Naive thymus-derived CD4-positive, alpha-beta T cell (primary cell): ENCODE measurements at regions of chr6 and their contacts with region 1.

Region 1: DNA sequence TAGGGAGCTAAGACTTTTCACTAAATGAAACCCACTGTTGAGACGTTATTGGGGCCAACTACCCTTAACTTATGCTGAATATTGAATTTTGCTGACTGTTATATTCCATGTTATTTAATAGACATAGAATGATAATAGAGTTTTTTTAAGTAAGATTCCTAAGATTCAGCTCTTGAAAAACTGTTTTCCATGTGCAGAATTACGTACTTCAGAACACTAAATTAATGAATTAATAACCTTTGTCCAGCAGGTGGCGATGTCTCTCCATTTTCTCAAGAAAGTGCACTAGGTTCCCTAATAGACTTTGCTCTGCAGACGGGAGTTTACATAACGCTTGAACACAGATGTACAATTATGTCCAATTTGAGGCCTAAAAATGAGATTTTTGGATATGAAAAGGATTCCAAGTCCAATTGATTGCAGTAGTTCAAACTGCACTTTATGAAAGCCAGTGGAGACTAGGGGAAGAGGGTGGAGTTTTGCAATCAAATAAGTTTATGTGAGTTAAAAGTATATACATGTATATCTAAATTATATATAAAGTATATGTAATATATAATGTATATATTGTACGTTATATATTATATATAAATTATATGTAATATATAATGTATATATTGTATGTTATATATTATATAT is 282.1 kb downstream of the UST start:
- DNase-seq: peak in 8 of 9 donors; percentile 45 to 83 (median 76)
- ATAC-seq: peak; percentile 85
- H3K4me3 ChIP-seq: no peak overlapping the region
- H3K4me3 Mint-ChIP-seq: peak overlapping the region in 1 of 10 donors; percentile 68
- H3K27ac ChIP-seq: no peak overlapping the region
- H3K27ac Mint-ChIP-seq: peak overlapping the region in 4 of 9 donors; percentile 2 to 81 (median 43)
- H3K4me1 ChIP-seq: peaks cover 8 to 15% of the 10 kb centered on the region in 2 donors
- H3K4me1 Mint-ChIP-seq: peaks cover 0 to 52% (median 12%) of the 10 kb centered on the region in 7 donors
- H3K27me3 ChIP-seq: no peaks in the 10 kb centered on the region
- H3K27me3 Mint-ChIP-seq: no peaks in the 10 kb centered on the region

Region 2: GRCh38 chr6:148559848-148560433 is 468.9 kb before region 1 on chr6:
- CTCF ChIA-PET with region 1: no interaction called
- POLR2A ChIA-PET with region 1: no interaction called
- intact Hi-C with region 1: loop called in 1 of 2 experiments (anchors 5 kb)
- DNase-seq: peak; percentile 7 to 73 (median 53)
- ATAC-seq: peak; percentile 91
- H3K4me3 ChIP-seq: peak overlapping the region; percentile 31
- H3K4me3 Mint-ChIP-seq: peak overlapping the region in 5 of 10 donors; percentile 22 to 49 (median 28)
- H3K27ac ChIP-seq: no peak overlapping the region
- H3K27ac Mint-ChIP-seq: no peak overlapping the region
- H3K4me1 ChIP-seq: no peaks in the 10 kb centered on the region
- H3K4me1 Mint-ChIP-seq: peaks cover 0 to 8% (median 7%) of the 10 kb centered on the region in 7 donors
- H3K27me3 ChIP-seq: no peaks in the 10 kb centered on the region
- H3K27me3 Mint-ChIP-seq: peaks cover 21 to 44% (median 33%) of the 10 kb centered on the region in 5 donors

Region 3: DNA sequence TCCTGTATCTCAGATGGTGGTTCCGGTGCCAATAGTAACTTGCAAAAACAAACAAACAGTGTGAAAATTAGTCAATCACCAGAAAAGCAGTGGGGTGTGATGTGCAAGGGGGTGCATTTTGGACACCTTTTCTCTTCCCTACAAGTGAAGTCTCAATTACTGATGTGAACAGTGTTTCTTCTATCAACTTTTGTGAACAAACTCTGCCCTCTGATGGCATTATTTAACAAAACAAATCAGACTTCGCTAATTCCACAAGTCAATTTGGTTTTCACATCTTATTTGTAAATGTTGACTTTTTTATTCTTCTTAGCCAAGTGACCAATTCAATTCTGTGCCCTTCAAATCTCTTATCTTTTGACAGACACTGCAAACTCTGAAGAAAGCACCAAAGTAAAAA is 69.9 kb before region 1 on chr6:
- CTCF ChIA-PET with region 1: no interaction called
- POLR2A ChIA-PET with region 1: no interaction called
- intact Hi-C with region 1: no loop called
- DNase-seq: no peak
- ATAC-seq: no peak
- H3K4me3 ChIP-seq: no peak overlapping the region
- H3K4me3 Mint-ChIP-seq: no peak overlapping the region
- H3K27ac ChIP-seq: no peak overlapping the region
- H3K27ac Mint-ChIP-seq: no peak overlapping the region
- H3K4me1 ChIP-seq: no peaks in the 10 kb centered on the region
- H3K4me1 Mint-ChIP-seq: no peaks in the 10 kb centered on the region
- H3K27me3 ChIP-seq: no peaks in the 10 kb centered on the region
- H3K27me3 Mint-ChIP-seq: peaks cover 0 to 15% (median 0%) of the 10 kb centered on the region in 5 donors

Region 4: GRCh38 chr6:149065658-149066556 is 37.0 kb after region 1 on chr6:
- CTCF ChIA-PET with region 1: interaction called, 7 read pairs
- POLR2A ChIA-PET with region 1: no interaction called
- intact Hi-C with region 1: loop called (anchors 1 kb)
- DNase-seq: peak in 7 of 9 donors; percentile 76 to 92 (median 88)
- ATAC-seq: peak; percentile 97
- H3K4me3 ChIP-seq: peak overlapping the region; percentile 26
- H3K4me3 Mint-ChIP-seq: peak overlapping the region; percentile 22 to 85 (median 70)
- H3K27ac ChIP-seq: peak overlapping the region; percentile 73
- H3K27ac Mint-ChIP-seq: peak overlapping the region; percentile 85 to 98 (median 94)
- H3K4me1 ChIP-seq: peaks cover 19 to 23% of the 10 kb centered on the region in 2 donors
- H3K4me1 Mint-ChIP-seq: peaks cover 24 to 63% (median 41%) of the 10 kb centered on the region in 7 donors
- H3K27me3 ChIP-seq: no peaks in the 10 kb centered on the region
- H3K27me3 Mint-ChIP-seq: no peaks in the 10 kb centered on the region

Region 5: DNA sequence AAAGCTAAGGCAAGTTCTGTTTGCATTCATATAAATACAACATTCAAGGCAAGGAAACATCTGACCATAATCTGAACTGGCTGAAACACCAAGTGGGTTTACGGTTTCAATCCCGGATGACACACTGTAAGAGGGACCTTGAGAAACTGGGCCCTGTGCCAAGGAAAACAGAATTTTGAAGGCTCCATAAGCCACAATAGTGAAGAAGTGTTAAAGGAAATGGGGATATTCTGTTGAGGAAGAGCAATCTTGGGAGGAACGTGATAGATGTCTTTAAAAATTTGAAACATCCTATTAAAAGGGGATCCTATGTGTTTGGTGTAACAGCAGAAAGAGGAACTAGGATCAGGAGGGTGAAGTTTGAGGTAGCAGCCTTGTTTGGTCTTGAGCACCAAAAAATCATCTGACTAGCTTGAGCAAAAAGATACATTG is 206.3 kb after region 1 on chr6:
- CTCF ChIA-PET with region 1: no interaction called
- POLR2A ChIA-PET with region 1: no interaction called
- intact Hi-C with region 1: loop called in 1 of 2 experiments (anchors 1 kb)
- DNase-seq: no peak
- ATAC-seq: no peak
- H3K4me3 ChIP-seq: no peak overlapping the region
- H3K4me3 Mint-ChIP-seq: peak overlapping the region in 8 of 10 donors; percentile 38 to 85 (median 76)
- H3K27ac ChIP-seq: peak overlapping the region; percentile 9
- H3K27ac Mint-ChIP-seq: peak overlapping the region; percentile 5 to 99 (median 95)
- H3K4me1 ChIP-seq: peaks cover 30 to 40% of the 10 kb centered on the region in 2 donors
- H3K4me1 Mint-ChIP-seq: peaks cover 35 to 67% (median 51%) of the 10 kb centered on the region in 7 donors
- H3K27me3 ChIP-seq: no peaks in the 10 kb centered on the region
- H3K27me3 Mint-ChIP-seq: no peaks in the 10 kb centered on the region

Region 6: DNA sequence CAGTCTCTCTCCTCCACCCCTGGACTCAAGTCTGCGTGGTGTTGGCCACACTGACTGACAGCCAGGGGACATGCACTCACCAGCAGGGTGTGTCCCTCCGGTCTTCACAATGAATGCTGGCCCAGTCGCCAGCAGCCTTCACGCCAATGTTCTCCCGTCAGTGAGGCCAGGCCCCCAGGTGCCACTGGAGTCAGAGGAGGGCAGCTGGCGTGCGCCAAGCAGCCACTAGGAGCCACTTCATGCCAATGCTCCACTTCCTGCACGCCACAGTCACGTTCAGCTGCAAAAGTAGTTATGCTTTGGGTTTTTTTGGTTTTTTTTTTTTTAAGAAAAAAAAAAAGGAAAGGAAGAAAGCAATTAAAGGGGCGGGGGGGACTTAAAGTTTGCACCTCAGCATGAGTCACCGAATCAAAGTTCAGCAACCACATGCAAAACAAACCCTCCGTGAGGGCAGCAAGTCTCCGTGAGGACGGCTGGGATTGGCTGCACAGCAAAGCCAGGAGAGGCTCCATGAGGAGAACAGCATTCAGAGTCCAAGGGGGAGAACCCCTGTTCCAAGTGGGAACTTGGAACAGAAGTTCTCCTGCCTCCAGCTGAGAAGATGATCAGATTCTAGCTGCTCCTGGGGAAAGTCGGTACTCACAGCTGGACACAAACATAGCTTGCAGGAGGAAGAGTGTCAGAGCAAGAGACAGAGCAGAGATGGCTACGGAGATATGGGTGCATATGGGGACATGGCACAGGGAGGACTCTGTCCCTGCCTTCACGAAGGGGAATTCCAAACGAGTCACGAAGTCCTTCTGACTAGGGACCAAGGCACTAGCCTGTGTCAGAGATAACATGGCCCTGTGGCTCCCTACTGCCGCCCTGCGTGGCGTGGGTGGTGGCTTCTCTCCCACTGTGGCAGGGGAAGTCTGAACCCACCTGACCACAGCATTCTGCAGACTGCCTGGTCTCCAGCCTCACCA is 456.1 kb after region 1 on chr6 and contains the start of gene ZC3H12D:
- CTCF ChIA-PET with region 1: interaction called, 12 read pairs
- POLR2A ChIA-PET with region 1: interaction called, 6 read pairs
- intact Hi-C with region 1: no loop called
- DNase-seq: peak; percentile 65 to 85 (median 79)
- ATAC-seq: peak; percentile 83
- H3K4me3 ChIP-seq: peak within 1 kb of the TSS; percentile 57
- H3K4me3 Mint-ChIP-seq: peak within 1 kb of the TSS; percentile 85 to 95 (median 92)
- H3K27ac ChIP-seq: peak within 1 kb of the TSS; percentile 90
- H3K27ac Mint-ChIP-seq: peak within 1 kb of the TSS; percentile 94 to 100 (median 98)
- H3K4me1 ChIP-seq: peaks cover 25 to 41% of the 10 kb centered on the region in 2 donors
- H3K4me1 Mint-ChIP-seq: peaks cover 34 to 68% (median 57%) of the 10 kb centered on the region in 7 donors
- H3K27me3 ChIP-seq: no peaks in the 10 kb centered on the region
- H3K27me3 Mint-ChIP-seq: no peaks in the 10 kb centered on the region
- total RNA-seq, gene ZC3H12D: 30.1 to 85.6 (median 74.1) TPM

Region 7: DNA sequence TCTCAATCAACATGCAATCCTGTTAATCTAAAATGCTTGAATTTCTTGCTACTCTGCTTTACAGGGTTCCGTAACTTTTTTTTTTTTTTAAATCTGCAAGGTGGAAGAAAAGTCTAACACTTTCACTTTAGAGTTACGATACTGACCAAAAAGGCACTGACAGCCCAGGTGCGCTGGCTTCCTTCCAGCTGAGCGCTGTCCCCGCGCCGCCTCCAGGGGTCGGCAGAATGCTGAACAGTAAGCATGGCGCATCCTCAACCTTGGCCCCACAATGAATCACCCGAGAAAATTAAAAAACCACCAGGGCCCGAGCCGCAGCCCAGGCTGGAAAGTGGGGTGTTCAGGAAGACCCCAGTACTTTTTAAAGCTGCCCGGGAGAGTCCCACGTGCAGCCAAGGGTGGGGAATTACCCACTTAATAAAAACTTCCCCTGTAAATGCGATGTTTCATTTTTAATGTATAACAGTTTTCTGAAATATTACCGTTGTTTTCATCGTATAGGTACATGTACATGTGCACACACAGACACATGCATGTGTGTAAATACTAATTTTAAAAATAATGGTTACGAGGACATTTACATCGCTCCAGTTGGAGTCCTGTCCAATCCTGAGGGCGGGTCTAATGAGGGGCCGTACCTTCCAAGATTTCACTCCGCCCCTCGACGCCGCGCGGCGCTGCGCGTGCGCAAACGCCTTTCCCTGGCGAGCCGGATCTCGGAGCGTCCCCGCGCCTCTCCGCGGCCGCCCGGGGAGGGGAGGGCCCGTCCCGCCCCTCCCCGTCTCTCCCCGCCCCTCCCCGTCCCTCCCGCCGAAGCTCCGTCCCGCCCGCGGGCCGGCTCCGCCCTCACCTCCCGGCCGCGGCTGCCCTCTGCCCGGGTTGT is 536.9 kb after region 1 on chr6 and contains the start of gene GINM1:
- CTCF ChIA-PET with region 1: interaction called, 3 read pairs
- POLR2A ChIA-PET with region 1: no interaction called
- intact Hi-C with region 1: loop called in 1 of 2 experiments (anchors 1 kb)
- DNase-seq: peak; percentile 92 to 99 (median 96)
- ATAC-seq: peak; percentile 94
- H3K4me3 ChIP-seq: peak within 1 kb of the TSS; percentile 89
- H3K4me3 Mint-ChIP-seq: peak within 1 kb of the TSS; percentile 93 to 99 (median 97)
- H3K27ac ChIP-seq: peak within 1 kb of the TSS; percentile 95
- H3K27ac Mint-ChIP-seq: peak within 1 kb of the TSS; percentile 87 to 97 (median 97)
- H3K4me1 ChIP-seq: peaks cover 0 to 6% of the 10 kb centered on the region in 2 donors
- H3K4me1 Mint-ChIP-seq: peaks cover 3 to 39% (median 19%) of the 10 kb centered on the region in 7 donors
- H3K27me3 ChIP-seq: no peaks in the 10 kb centered on the region
- H3K27me3 Mint-ChIP-seq: peaks cover 0 to 7% (median 0%) of the 10 kb centered on the region in 5 donors
- total RNA-seq, gene GINM1: 14.4 to 27.3 (median 19.9) TPM

Region 8: DNA sequence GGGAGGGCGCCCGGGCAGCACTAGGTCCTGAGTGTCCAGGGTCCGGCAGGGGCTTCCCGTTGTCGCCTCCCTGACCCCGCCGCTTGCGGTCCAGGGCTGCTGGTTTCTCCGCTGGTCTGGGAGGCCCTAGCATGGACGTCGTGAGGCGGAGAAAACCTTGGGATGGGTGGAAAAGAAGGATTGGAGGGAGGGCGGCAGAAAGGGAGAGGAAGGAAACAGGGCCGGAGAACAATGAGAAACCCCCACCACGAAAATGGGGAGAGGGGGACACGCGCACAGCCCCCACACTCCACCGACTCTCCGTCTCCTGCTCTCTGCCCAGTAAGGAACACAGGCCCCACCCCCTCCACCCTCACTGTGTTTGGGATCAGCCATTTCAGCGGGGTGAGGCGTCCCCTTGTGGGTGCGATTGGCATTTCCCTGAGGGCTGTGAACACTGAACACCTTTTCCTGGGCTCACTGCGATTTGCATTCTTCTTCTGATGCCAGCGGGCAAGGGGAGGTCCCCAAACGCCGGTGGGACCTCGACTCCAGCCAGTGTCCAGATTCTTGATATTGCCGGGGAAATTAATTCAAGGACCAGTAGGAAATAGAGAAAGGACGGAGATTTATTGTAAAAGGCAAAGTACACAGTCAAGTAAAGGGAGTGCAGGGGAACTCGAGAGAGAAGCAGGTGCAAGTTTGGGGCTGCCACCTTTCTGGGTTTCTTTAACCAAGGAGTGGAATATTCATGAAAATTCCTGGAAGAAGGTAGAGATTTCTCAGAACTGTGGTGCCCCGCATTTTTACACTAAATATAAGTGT is 897.3 kb after region 1 on chr6:
- CTCF ChIA-PET with region 1: no interaction called
- POLR2A ChIA-PET with region 1: no interaction called
- intact Hi-C with region 1: loop called in 1 of 2 experiments (anchors 10 kb)
- DNase-seq: peak; percentile 35 to 77 (median 56)
- ATAC-seq: peak; percentile 76
- H3K4me3 ChIP-seq: no peak overlapping the region
- H3K4me3 Mint-ChIP-seq: peak overlapping the region in 9 of 10 donors; percentile 12 to 73 (median 40)
- H3K27ac ChIP-seq: no peak overlapping the region
- H3K27ac Mint-ChIP-seq: peak overlapping the region in 1 of 9 donors; percentile 10
- H3K4me1 ChIP-seq: peaks cover 6 to 7% of the 10 kb centered on the region in 2 donors
- H3K4me1 Mint-ChIP-seq: peaks cover 18 to 30% (median 26%) of the 10 kb centered on the region in 7 donors
- H3K27me3 ChIP-seq: peaks cover 21 to 32% of the 10 kb centered on the region in 2 donors
- H3K27me3 Mint-ChIP-seq: peaks cover 85 to 93% (median 87%) of the 10 kb centered on the region in 5 donors